Thyroid gland (tissue), 4 donors: ENCODE measurements at regions of chr6 and their contacts with region 1.

Region 1: GRCh38 chr6:36360241-36361054 is 23.8 kb upstream of the BNIP5 start:
- DNase-seq: peak; percentile 74 to 76
- H3K4me3 ChIP-seq: no peak overlapping the region
- H3K27ac ChIP-seq: no peak overlapping the region
- H3K4me1 ChIP-seq: peaks cover 0 to 18% of the 10 kb centered on the region in 2 donors
- H3K27me3 ChIP-seq: no peaks in the 10 kb centered on the region
- CTCF ChIP-seq: peak; percentile 70 to 88 (median 77)
- POLR2A ChIP-seq: no peak

Region 2: DNA sequence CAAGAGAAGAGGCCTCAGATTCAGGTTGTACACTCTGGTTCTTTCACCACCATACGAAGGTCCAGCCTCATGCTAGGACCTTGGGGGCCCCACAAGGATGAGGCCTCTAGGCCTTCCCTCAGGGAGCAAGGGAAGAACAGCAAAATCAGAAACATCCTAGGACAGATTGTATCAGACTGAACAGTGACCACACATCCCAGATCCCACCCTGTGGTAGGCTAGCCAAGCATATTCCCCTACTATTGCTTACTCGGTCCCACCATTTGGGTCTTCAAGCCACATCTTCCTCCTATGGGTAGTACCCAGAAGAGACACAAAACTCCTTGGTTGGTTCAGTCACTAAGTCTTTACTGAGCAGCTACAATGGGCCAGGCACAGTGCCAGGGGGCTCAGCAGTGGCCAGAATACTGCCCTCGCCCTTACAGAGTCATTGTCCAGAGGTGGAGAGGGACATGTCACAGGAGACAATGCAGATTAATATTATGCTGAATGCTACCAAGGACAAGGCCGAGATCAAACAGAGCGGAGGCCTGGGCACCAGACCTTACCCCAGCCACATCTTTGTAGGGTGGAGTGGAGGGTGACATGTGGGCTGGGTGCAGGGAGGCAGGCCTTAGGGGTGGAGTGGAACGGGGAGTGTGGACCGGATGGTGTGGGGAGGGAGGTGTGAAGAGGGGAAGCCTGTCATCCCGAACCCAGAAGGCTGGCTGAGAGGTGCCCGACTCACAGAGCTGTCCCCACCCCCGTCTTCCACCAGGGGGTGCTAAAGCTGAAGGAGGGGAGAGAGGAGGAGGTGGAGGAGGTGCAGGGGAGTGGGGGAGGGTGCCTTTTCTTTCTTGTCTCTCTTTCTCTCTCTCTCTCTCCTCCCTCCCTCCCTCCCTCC is 236.9 kb before region 1 on chr6:
- intact Hi-C with region 1: loop called (anchors 5 kb)
- DNase-seq: peak; percentile 76 to 84
- H3K4me3 ChIP-seq: no peak overlapping the region
- H3K27ac ChIP-seq: peak overlapping the region in 1 of 3 donors; percentile 28
- H3K4me1 ChIP-seq: peaks cover 8 to 23% of the 10 kb centered on the region in 2 donors
- H3K27me3 ChIP-seq: no peaks in the 10 kb centered on the region
- CTCF ChIP-seq: peak; percentile 25 to 79 (median 64)
- POLR2A ChIP-seq: no peak

Region 3: DNA sequence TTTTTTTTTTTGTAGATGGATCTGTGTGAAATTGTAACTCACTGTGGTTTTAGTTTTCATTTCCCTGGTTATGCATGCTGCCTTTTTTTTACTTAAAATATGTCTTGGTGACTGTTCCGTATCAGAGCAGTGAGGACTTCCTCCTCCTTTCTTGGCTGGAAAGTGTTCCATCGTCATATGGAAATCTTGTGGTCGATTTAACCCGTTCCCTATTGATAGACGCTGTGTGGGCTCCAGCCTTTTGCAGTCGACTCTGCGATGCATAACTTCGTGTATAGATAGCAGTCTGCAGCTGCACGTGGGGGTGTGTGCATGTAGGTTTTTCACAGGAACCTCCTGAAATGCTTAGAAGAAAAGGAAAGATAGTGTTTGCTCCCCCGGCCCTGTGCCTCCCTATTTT is 118.7 kb before region 1 on chr6:
- intact Hi-C with region 1: no loop called
- DNase-seq: no peak
- H3K4me3 ChIP-seq: no peak overlapping the region
- H3K27ac ChIP-seq: no peak overlapping the region
- H3K4me1 ChIP-seq: no peaks in the 10 kb centered on the region
- H3K27me3 ChIP-seq: no peaks in the 10 kb centered on the region
- CTCF ChIP-seq: no peak
- POLR2A ChIP-seq: no peak

Region 4: GRCh38 chr6:36716476-36717093 is 356.1 kb after region 1 on chr6:
- intact Hi-C with region 1: no loop called
- DNase-seq: no peak
- H3K4me3 ChIP-seq: no peak overlapping the region
- H3K27ac ChIP-seq: no peak overlapping the region
- H3K4me1 ChIP-seq: no peaks in the 10 kb centered on the region
- H3K27me3 ChIP-seq: no peaks in the 10 kb centered on the region
- CTCF ChIP-seq: no peak
- POLR2A ChIP-seq: no peak